Sciatic nerve (tissue), 2 donors: ENCODE measurements at regions of chr22 and their contacts with region 1.

Region 1: GRCh38 chr22:28051787-28052356 is 132.8 kb upstream of the PITPNB start:
- DNase-seq: peak; percentile 84
- ATAC-seq: peak; percentile 73

Region 2: GRCh38 chr22:26122920-26123468 is 1928.9 kb before region 1 on chr22:
- intact Hi-C with region 1: no loop called
- DNase-seq: no peak
- ATAC-seq: no peak

Region 3: DNA sequence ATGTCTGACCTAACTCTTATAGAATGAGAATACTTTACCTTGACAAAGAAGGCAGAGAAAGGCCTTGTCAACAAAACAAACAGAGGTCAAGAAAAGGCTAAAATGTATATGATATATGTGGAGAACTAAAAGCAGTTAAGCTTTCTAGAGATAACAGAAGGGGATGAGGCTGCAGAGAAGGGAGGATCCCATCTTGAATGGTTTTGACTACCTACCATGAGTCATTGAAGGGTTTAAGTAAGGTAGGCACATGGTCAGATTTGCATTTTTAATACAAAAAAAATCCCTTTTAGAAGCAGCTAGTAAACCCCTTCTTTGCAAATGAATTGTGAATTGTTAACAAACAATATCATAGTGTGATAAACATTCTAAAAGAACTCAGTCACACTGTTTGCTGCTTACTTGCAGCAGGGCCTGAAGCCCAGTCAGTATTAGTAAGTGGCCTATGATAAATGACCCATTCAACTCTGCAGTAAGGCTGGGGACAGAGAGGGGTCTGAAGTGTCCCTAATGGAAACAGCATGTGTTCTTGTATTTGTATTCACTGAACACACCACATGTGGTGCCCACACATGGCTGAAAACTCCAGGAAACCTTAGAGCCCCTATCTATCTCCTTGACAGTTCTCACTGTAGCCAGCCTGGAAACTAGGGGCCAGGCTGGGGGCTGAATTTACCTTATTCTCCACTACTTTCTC is 195.9 kb after region 1 on chr22:
- intact Hi-C with region 1: no loop called
- DNase-seq: no peak
- ATAC-seq: no peak

Region 4: DNA sequence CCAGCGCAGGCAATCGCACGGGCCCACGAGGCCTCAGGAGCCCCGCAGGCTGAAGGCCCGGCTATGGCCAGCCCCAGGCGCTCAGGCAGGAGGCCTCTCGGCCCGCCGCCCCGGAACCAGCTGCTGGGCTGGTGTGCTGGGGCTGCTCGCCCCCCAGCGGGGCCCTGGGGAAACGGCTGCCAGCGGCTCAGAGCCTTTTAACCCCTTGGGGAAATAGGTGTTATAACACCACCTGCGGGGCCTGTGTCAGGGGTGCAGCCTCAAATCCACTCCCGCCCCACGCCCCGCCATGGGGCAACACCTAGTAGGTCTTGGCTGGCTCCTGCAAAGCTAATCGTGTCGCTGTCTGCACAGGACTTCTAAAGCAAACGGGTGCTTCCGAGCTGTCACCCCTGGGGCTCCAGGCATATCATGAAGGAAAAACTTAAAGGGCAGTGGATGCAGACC is 390.4 kb after region 1 on chr22:
- intact Hi-C with region 1: loop called (anchors 10 kb)
- DNase-seq: peak; percentile 82
- ATAC-seq: peak; percentile 90

Region 5: GRCh38 chr22:28594797-28595462 is 543.1 kb after region 1 on chr22:
- intact Hi-C with region 1: loop called (anchors 10 kb)
- DNase-seq: no peak
- ATAC-seq: peak; percentile 95